ENCODE measurements at regions of chr17 and their contacts with region 1.

Region 1: DNA sequence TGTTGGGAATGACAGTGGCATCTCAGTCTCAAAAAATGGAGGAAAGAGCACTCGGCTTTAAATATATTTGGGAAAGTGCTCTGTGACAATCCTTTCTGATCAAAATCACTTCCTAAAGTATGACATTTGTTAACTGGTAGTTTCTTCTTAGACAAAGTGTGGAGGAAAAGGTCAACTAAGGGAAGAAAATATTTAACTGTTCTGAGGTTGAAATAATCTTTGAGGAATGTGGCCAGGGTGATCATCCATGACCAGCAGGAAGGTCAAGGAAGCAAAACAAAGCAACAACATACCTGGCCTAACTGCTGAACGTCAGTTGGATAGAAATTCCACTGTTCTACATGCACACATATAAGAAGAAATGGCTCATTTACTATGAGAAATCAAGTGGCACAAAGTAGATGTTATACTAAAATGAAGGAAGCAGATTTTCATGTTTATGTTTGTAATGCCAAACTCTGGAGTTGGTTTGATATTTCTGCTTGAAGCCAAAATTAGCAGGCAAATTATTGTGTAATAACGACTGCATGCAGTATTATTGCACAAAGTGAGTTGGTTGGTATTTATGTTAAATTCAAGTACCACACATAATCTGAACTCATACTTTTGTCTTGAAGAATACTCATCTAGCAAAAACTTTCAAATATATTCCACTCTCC is 87.3 kb upstream of the CORO6 start:
- DNase-seq: no peak
- ATAC-seq: no peak
- H3K4me3 ChIP-seq: no peak overlapping the region
- H3K4me3 Mint-ChIP-seq: no peak overlapping the region
- H3K27ac ChIP-seq: no peak overlapping the region
- H3K27ac Mint-ChIP-seq: peak overlapping the region; percentile 77 to 92
- H3K4me1 ChIP-seq: peaks cover 33% of the 10 kb centered on the region
- H3K4me1 Mint-ChIP-seq: peaks cover 66% of the 10 kb centered on the region in 2 donors
- H3K27me3 ChIP-seq: no peaks in the 10 kb centered on the region
- H3K27me3 Mint-ChIP-seq: no peaks in the 10 kb centered on the region
- CTCF ChIP-seq: no peak

Region 2: DNA sequence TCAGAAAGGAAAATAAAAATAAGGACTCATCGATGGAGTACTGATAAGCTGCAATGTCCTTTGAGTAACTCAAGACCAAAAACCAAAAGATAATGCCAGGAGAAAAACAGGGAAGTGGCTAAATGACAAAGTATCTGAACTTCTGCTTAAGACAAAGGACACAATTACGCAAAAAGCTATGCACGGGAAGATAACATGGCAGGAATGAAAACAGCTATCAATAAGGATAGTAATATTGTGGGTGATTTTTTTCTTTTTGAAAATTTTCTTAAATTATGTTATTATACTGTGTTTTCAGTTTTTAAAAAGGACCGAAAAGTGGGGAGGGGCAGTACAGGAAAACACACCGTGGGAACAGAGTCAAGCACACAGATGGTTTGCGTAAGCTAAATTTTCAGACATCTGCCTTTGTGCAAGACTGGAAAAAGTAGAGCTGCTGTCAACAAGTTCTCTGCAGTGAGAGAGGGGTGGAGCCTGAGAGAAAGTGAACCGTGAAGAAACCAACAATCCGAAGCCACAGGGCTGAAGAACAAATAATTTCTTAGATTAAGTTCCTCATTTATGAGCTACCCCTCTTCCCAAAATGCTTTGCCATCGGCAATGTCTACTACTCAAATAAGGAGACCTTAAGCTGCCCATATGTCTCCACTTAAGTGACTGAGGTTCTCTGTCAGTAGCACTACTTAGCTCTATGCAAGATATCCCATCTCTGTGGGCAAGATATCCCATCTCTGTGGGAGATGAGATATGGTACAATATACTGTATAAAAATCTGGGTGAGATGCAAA is 12.6 kb after region 1 on chr17:
- intact Hi-C with region 1: loop called (anchors 1 kb)
- DNase-seq: peak; percentile 35 to 81
- ATAC-seq: peak; percentile 66 to 85 (median 82)
- H3K4me3 ChIP-seq: no peak overlapping the region
- H3K4me3 Mint-ChIP-seq: peak overlapping the region; percentile 86
- H3K27ac ChIP-seq: peak overlapping the region; percentile 78
- H3K27ac Mint-ChIP-seq: peak overlapping the region; percentile 86 to 96
- H3K4me1 ChIP-seq: peaks cover 49% of the 10 kb centered on the region
- H3K4me1 Mint-ChIP-seq: peaks cover 79 to 84% of the 10 kb centered on the region in 2 donors
- H3K27me3 ChIP-seq: no peaks in the 10 kb centered on the region
- H3K27me3 Mint-ChIP-seq: no peaks in the 10 kb centered on the region
- CTCF ChIP-seq: no peak

Region 3: DNA sequence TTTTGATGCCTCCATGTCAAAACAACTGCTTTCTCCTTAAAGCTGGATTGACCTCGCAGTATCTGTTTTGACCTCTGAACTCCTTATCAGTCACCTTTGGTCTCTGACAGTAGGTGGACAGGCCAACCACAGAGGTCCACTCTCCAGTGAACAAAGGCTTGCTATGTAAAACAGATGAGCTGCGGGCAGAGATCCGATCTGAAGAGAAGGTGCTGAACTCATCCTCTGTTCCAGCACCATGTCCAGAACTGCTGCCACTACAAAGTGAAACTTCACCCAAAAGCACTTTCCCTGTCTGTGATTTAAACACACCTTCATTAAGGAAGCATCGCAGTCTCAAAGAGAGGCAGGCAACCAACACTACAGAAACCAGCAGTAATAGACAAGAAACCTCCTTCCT is 30.0 kb after region 1 on chr17:
- intact Hi-C with region 1: loop called (anchors 5 kb)
- DNase-seq: peak in 1 of 2 donors; percentile 38
- ATAC-seq: peak in 1 of 3 donors; percentile 43
- H3K4me3 ChIP-seq: no peak overlapping the region
- H3K4me3 Mint-ChIP-seq: no peak overlapping the region
- H3K27ac ChIP-seq: peak overlapping the region; percentile 0
- H3K27ac Mint-ChIP-seq: peak overlapping the region; percentile 56 to 78
- H3K4me1 ChIP-seq: peaks cover 19% of the 10 kb centered on the region
- H3K4me1 Mint-ChIP-seq: peaks cover 40 to 42% of the 10 kb centered on the region in 2 donors
- H3K27me3 ChIP-seq: no peaks in the 10 kb centered on the region
- H3K27me3 Mint-ChIP-seq: no peaks in the 10 kb centered on the region
- CTCF ChIP-seq: no peak

Region 4: GRCh38 chr17:29760761-29761696 is 51.0 kb after region 1 on chr17:
- intact Hi-C with region 1: loop called (anchors 1 kb)
- DNase-seq: peak; percentile 92 to 94
- ATAC-seq: peak; percentile 85 to 97 (median 90)
- H3K4me3 ChIP-seq: peak overlapping the region; percentile 85
- H3K4me3 Mint-ChIP-seq: peak overlapping the region; percentile 95
- H3K27ac ChIP-seq: peak overlapping the region; percentile 81
- H3K27ac Mint-ChIP-seq: peak overlapping the region; percentile 92 to 93
- H3K4me1 ChIP-seq: peaks cover 29% of the 10 kb centered on the region
- H3K4me1 Mint-ChIP-seq: peaks cover 35 to 39% of the 10 kb centered on the region in 2 donors
- H3K27me3 ChIP-seq: no peaks in the 10 kb centered on the region
- H3K27me3 Mint-ChIP-seq: no peaks in the 10 kb centered on the region
- CTCF ChIP-seq: no peak